GM12878 (cell line): ENCODE measurements at regions of chr5 and their contacts with region 1.

Region 1: GRCh38 chr5:177311723-177312648 is at the start of gene MXD3:
- DNase-seq: peak; percentile 76
- ATAC-seq: peak; percentile 89
- H3K4me3 ChIP-seq: peak within 1 kb of the TSS; percentile 93
- H3K27ac ChIP-seq: peak within 1 kb of the TSS; percentile 92
- H3K4me1 ChIP-seq: peaks cover 17% of the 10 kb centered on the region
- H3K27me3 ChIP-seq: no peaks in the 10 kb centered on the region
- CTCF ChIP-seq: no peak
- EP300 ChIP-seq: no peak
- POLR2A ChIP-seq: peak; percentile 78
- RAD21 ChIP-seq: no peak
- polyA plus RNA-seq, gene MXD3: 0.24 to 0.93 TPM

Region 2: GRCh38 chr5:177071666-177072385 is 240.2 kb before region 1 on chr5:
- CTCF ChIA-PET with region 1: interaction called, 13 read pairs
- POLR2A ChIA-PET with region 1: no interaction called
- RAD21 ChIA-PET with region 1: no interaction called
- SMC1A ChIA-PET with region 1: no interaction called
- in situ Hi-C with region 1: no loop called
- intact Hi-C with region 1: no loop called
- DNase-seq: peak; percentile 56
- ATAC-seq: peak; percentile 98
- H3K4me3 ChIP-seq: no peak overlapping the region
- H3K27ac ChIP-seq: no peak overlapping the region
- H3K4me1 ChIP-seq: peaks cover 10% of the 10 kb centered on the region
- H3K27me3 ChIP-seq: no peaks in the 10 kb centered on the region
- CTCF ChIP-seq: peak; percentile 87 to 90 (median 90)
- EP300 ChIP-seq: no peak
- POLR2A ChIP-seq: no peak
- RAD21 ChIP-seq: peak; percentile 63

Region 3: DNA sequence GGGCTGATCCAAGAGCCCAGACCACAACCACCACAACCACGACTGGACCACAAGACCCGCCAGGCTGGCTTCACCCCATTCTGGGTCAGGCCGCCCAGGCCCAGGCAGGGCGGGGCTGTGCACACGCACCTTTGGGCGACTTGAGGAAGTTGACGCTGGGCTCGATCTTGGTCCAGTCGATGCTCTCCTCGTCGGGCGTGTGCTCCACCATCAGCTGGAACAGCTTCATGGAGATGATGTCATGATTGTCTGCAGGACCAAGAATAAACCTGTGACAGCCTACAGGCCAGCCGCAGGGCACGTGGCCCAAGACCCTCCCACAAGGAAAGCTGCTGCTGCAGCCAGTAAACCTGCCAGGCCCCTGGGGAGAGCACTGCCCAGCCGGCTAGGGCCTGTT is 22.2 kb after region 1 on chr5:
- CTCF ChIA-PET with region 1: no interaction called
- POLR2A ChIA-PET with region 1: no interaction called
- RAD21 ChIA-PET with region 1: no interaction called
- SMC1A ChIA-PET with region 1: no interaction called
- in situ Hi-C with region 1: no loop called
- intact Hi-C with region 1: no loop called
- DNase-seq: no peak
- ATAC-seq: no peak
- H3K4me3 ChIP-seq: no peak overlapping the region
- H3K27ac ChIP-seq: no peak overlapping the region
- H3K4me1 ChIP-seq: no peaks in the 10 kb centered on the region
- H3K27me3 ChIP-seq: no peaks in the 10 kb centered on the region
- CTCF ChIP-seq: no peak
- EP300 ChIP-seq: no peak
- POLR2A ChIP-seq: no peak; the same call in 1 of the 2 replicates
- RAD21 ChIP-seq: no peak

Region 4: DNA sequence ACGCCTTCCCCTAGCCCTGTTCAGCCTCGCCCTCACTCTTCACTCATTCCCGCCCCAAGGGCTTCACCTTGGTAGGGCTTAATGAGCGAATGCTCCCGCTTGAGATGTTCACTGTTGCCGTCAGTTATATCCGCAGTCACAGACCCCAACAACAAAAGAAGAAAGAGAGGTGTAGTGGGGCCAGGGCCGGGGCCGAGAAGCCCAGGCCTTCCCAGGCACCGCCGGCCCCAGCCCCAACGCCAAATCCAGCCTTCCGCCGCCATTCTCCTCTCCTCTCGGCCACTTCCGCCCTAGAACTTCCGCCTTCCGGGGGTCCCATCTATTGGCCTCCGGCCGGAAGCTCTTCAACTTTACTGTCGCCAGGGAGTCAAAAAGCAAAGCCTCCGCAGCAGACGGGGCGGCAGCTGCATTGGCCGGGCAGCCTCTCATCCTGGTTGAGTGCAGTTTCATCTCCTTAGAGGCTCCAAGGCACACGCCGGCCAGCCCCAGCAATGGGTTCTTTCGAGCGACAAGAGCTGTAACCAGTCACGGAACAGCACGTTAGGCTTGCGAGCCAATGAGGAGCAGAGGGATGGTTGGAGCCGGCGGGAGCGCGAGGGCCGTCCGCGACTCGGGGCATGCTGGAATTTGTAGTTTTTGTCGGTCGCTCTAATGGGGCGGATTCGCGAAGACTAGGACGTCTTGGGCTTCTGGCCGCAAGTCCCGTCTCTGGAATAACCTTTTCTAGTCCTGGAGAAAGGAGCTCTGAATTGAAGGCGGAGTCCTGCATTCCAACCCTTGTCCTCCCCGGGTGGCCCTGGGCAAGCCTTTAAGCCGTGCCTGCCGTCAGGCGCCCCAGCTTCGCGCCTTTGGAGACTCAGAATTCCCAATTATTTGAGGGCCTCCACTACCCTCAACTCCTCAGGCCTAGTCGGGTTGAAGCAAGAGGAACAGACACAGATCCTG is 39.7 kb after region 1 on chr5 and contains the start of gene LMAN2:
- CTCF ChIA-PET with region 1: interaction called, 13 read pairs
- POLR2A ChIA-PET with region 1: interaction called, 3 read pairs
- RAD21 ChIA-PET with region 1: interaction called, 7 read pairs
- SMC1A ChIA-PET with region 1: interaction called, 5 read pairs
- in situ Hi-C with region 1: no loop called
- intact Hi-C with region 1: no loop called
- DNase-seq: peak; percentile 93
- ATAC-seq: peak; percentile 99
- H3K4me3 ChIP-seq: peak within 1 kb of the TSS; percentile 98
- H3K27ac ChIP-seq: peak within 1 kb of the TSS; percentile 89
- H3K4me1 ChIP-seq: peaks cover 21% of the 10 kb centered on the region
- H3K27me3 ChIP-seq: no peaks in the 10 kb centered on the region
- CTCF ChIP-seq: no peak
- EP300 ChIP-seq: no peak
- POLR2A ChIP-seq: peak; percentile 88
- RAD21 ChIP-seq: no peak
- polyA plus RNA-seq, gene LMAN2: 2.4 to 11.4 TPM

Region 5: DNA sequence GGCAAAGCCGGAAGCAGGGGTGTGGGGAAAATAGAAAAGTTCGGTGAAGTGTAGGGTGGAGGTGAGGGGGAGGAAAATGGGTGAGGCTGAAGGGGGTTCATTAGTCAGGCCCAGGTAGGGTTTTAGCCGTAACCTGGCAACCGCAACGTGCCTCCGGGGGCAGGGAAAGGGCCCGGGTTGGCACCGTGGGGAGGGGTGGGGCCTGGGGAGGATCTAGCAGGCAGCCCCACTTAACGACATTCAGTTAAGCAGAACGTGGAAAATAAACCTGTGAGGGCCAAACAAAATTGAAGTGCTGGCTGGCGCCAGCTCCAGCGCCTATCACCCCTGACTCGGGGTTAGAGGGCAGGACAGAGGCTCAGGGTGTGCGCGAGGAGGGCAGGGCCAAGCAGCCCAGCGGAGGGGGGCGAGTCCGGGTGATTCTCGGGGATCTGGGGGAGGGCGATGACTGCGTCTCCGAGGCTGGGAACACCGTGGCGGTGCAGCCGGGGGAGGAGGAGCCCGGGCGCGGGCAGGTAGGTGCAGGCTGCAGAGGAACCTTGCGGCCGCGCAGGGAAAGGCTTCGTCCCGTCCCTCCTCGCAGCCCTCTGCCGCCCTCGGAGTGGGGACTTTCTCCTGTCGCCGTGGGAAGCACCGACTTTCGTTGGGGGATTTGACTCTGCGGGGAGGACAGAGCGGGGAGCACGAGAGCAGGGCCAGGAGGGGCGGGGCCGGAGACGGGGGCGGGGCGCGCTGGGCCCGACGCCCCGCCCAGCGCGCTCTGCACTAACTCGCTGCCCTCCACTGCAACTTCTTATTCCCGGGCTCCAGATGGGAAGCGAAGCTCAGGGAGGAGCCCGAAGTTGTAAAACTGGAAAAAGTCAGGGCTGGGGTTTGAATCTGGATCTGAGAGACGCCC is 50.9 kb after region 1 on chr5:
- CTCF ChIA-PET with region 1: interaction called, 7 read pairs
- POLR2A ChIA-PET with region 1: interaction called, 7 read pairs
- RAD21 ChIA-PET with region 1: interaction called, 3 read pairs
- SMC1A ChIA-PET with region 1: interaction called, 4 read pairs
- in situ Hi-C with region 1: no loop called
- intact Hi-C with region 1: loop called (anchors 5 kb)
- DNase-seq: no peak
- ATAC-seq: peak; percentile 72
- H3K4me3 ChIP-seq: peak overlapping the region; percentile 63
- H3K27ac ChIP-seq: peak overlapping the region; percentile 91
- H3K4me1 ChIP-seq: peaks cover 59% of the 10 kb centered on the region
- H3K27me3 ChIP-seq: no peaks in the 10 kb centered on the region
- CTCF ChIP-seq: no peak; a peak in 1 of 6 replicates
- EP300 ChIP-seq: no peak; a peak in 1 of 4 replicates
- POLR2A ChIP-seq: peak; percentile 59
- RAD21 ChIP-seq: no peak

Region 6: GRCh38 chr5:177370488-177371119 is 58.6 kb after region 1 on chr5:
- CTCF ChIA-PET with region 1: interaction called, 17 read pairs
- POLR2A ChIA-PET with region 1: interaction called, 4 read pairs
- RAD21 ChIA-PET with region 1: no interaction called
- SMC1A ChIA-PET with region 1: interaction called, 5 read pairs
- in situ Hi-C with region 1: no loop called
- intact Hi-C with region 1: no loop called
- DNase-seq: no peak
- ATAC-seq: peak; percentile 87
- H3K4me3 ChIP-seq: no peak overlapping the region
- H3K27ac ChIP-seq: no peak overlapping the region
- H3K4me1 ChIP-seq: peaks cover 28% of the 10 kb centered on the region
- H3K27me3 ChIP-seq: no peaks in the 10 kb centered on the region
- CTCF ChIP-seq: peak; percentile 9 to 52 (median 45); a peak in 4 of 6 replicates
- EP300 ChIP-seq: no peak
- POLR2A ChIP-seq: no peak
- RAD21 ChIP-seq: no peak